Caco-2 (cell line): ENCODE measurements at regions of chr12 and their contacts with region 1.

Region 1: DNA sequence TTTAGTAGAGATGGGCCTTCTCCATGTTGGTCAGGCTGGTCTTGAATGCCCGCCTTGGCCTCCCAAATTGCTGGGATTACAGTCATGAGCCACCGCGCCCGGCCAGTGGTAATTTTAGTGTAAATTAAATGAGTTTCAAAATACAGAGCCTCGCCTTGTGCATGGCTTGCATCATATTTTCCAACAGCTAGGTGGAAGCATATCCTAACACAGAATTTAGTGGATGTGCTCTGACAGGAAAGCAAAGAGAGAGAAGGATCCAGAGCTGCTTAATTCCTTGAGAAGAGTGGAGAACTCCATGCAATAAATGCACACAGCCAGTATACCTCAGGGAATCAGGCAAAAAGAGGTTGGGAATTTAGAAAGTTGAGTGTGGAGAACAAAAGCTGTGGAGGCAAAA is 2.5 kb downstream of the OR6C2 start:
- DNase-seq: peak in 1 of 2 experiments; percentile 32
- H3K4me3 ChIP-seq: no peak overlapping the region
- H3K4me3 Mint-ChIP-seq: no peak overlapping the region
- H3K27ac Mint-ChIP-seq: no peak overlapping the region
- H3K4me1 ChIP-seq: no peaks in the 10 kb centered on the region
- H3K4me1 Mint-ChIP-seq: peaks cover 8% of the 10 kb centered on the region
- H3K27me3 ChIP-seq: no peaks in the 10 kb centered on the region
- H3K27me3 Mint-ChIP-seq: no peaks in the 10 kb centered on the region
- CTCF ChIP-seq: peak; percentile 25 to 51

Region 2: DNA sequence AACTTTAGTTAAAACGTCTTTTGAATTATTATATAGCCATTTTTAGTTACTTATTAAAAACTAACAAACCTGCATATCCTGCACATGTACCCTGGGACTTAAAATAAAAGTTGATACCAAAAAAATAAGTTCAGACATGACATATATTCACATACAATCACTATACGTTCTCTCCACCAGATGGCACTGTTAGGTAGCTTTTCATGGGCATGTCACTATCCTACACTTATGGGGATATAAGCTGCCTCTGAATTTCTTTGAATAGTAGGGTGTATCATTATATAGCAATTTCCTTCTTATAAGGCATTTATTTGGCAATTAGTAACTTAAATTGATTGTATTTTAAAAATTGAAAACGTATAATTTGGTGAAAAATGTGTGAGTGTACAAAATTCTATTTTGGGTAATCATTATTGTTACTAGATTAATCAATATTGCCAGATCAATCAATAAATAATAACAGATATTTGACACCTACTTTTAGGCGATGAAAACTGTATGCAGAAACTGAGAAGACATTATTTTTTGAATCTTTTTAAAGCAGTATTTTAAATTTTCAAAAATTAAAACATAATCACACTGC is 257.3 kb before region 1 on chr12:
- CTCF ChIA-PET with region 1: no interaction called
- POLR2A ChIA-PET with region 1: no interaction called
- intact Hi-C with region 1: loop called (anchors 1 kb)
- DNase-seq: peak; percentile 50 to 76
- H3K4me3 ChIP-seq: no peak overlapping the region
- H3K4me3 Mint-ChIP-seq: no peak overlapping the region
- H3K27ac Mint-ChIP-seq: no peak overlapping the region
- H3K4me1 ChIP-seq: no peaks in the 10 kb centered on the region
- H3K4me1 Mint-ChIP-seq: peaks cover 4% of the 10 kb centered on the region
- H3K27me3 ChIP-seq: no peaks in the 10 kb centered on the region
- H3K27me3 Mint-ChIP-seq: peaks cover 3% of the 10 kb centered on the region
- CTCF ChIP-seq: peak; percentile 54 to 73

Region 3: DNA sequence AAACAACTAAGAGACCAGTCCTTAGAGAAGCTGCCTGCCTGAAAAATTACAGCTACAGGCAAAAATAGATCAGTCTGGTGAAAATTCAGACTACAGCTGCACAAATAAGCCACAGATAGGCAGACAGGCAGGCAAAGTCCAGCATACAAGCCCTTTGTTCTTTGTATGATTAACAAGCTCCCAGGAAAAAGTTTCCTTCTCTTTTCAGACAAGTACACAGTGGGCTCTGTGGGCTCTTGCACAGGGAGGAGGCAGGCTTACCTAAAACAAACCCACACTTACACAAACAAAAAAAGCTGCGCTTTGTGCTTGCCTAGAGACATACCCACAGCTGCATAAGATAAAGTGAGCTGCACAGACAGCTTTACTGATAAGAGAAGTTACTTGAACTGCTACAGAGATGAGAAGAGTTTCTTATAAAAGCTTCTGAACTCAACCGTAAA is 53.5 kb after region 1 on chr12:
- CTCF ChIA-PET with region 1: interaction called, 10 read pairs
- POLR2A ChIA-PET with region 1: no interaction called
- intact Hi-C with region 1: no loop called
- DNase-seq: peak; percentile 82 to 88
- H3K4me3 ChIP-seq: no peak overlapping the region
- H3K4me3 Mint-ChIP-seq: peak overlapping the region; percentile 41
- H3K27ac Mint-ChIP-seq: peak overlapping the region; percentile 83
- H3K4me1 ChIP-seq: peaks cover 44% of the 10 kb centered on the region
- H3K4me1 Mint-ChIP-seq: peaks cover 26% of the 10 kb centered on the region
- H3K27me3 ChIP-seq: no peaks in the 10 kb centered on the region
- H3K27me3 Mint-ChIP-seq: no peaks in the 10 kb centered on the region
- CTCF ChIP-seq: no peak